ENCODE measurements at regions of chr6 and their contacts with region 1.

Region 1: DNA sequence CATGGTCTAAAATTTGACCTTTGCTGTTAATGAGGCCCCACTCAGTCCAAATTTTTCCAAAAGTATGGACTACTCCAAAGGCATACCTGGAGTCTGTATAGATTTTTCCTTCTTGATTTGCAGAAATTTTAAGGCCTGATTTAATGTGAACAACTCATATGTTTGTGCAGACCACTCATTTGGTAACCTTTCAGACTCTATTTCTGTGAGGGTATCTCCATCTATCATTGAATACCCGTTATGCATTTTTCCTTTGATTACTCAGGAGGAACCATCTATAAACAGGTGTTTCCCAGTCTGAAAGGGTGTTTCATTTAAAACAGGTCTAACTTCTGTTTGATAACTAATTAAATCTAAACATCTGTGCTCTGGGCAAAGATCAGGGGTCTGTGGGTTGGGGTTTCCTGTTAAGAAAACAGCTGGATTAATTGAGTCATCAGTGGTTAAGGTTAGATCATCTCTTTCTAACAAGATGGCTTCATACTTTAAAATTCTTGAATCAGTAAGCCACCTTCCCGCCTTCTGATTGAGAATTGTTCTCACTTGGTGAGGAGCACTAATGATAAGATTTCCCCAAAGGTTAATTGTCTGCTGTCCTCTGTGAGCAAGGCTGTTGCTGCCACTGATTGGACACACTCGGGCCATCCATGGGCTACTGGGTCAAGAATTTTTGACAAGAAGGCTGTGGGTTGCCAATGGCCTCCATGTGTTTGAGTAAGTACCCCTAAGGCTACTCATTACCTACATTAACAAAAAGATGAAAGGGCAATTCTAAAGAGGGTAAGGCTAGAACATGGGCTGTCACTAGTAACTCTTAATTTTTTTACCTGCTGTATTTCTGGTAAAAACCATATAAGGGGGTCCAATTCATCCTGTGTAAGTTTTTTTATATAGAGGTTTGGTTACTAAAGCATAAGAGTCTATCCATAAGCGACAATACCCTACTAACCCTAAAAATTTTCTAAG is 24.1 kb downstream of the HLA-B start:
- DNase-seq: peak in 5 of 9 experiments; percentile 25 to 82 (median 62)
- ATAC-seq: peak; percentile 82
- H3K4me3 ChIP-seq: no peak overlapping the region
- H3K4me3 Mint-ChIP-seq: no peak overlapping the region
- H3K27ac ChIP-seq: no peak overlapping the region
- H3K27ac Mint-ChIP-seq: peak overlapping the region; percentile 14
- H3K4me1 ChIP-seq: no peaks in the 10 kb centered on the region
- H3K4me1 Mint-ChIP-seq: peaks cover 13% of the 10 kb centered on the region
- H3K27me3 ChIP-seq: no peaks in the 10 kb centered on the region
- H3K27me3 Mint-ChIP-seq: no peaks in the 10 kb centered on the region
- CTCF ChIP-seq: no peak

Region 2: DNA sequence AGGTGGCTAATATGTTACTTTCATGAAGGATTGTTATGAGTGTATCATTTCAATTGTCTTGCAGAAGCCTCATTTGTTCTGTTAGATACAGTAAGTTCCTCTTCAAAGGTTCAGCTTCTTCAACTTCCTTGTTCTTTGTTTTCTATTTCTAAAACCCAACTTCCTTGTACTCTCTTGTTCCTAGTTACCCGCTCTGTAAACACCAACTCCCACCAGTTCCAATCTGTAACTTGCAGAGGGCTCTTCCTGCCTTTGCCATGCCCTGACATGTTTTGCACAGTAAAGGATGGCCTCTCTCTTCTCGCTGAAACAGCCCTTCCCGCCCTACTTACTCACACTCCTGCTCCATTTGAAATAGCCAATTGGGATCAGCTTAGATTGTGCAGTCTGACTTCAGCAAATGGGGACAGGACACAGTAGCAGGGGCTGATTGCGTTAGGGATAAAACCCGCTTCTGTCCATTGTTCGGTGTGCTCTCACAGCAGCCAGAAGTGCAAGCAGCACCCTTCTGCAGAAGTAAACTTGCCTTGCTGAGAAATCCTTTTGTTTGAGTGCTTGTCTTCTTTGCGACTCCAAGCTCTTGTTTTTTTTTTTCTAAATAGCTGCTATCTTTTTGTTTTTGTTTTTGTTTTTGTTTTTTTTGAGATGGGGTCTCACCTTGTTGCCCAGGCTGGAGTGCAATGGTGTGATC is 116.6 kb before region 1 on chr6:
- CTCF ChIA-PET with region 1: no interaction called
- POLR2A ChIA-PET with region 1: no interaction called
- intact Hi-C with region 1: no loop called
- DNase-seq: no peak
- ATAC-seq: no peak
- H3K4me3 ChIP-seq: no peak overlapping the region
- H3K4me3 Mint-ChIP-seq: no peak overlapping the region
- H3K27ac ChIP-seq: no peak overlapping the region
- H3K27ac Mint-ChIP-seq: no peak overlapping the region
- H3K4me1 ChIP-seq: no peaks in the 10 kb centered on the region
- H3K4me1 Mint-ChIP-seq: peaks cover 6% of the 10 kb centered on the region
- H3K27me3 ChIP-seq: no peaks in the 10 kb centered on the region
- H3K27me3 Mint-ChIP-seq: no peaks in the 10 kb centered on the region
- CTCF ChIP-seq: no peak

Region 3: DNA sequence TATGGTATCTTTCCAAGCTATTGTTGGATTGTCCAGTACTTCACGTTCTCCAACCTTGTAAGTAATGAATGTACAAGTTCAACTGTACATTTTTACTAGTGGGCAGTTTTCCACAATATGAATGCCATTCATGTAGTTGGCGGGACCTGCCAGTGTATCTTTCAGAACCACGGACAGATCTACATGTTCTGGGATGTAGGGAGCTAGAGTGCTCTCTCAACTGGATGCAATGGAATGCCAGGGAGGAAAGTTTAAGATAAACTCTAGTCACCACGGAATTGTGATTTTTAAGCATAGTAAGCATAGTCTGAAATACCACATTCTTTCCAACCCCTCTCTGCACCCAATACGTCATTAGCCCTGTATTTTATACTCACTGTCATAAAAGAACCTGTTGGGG is 39.6 kb before region 1 on chr6:
- CTCF ChIA-PET with region 1: no interaction called
- POLR2A ChIA-PET with region 1: no interaction called
- intact Hi-C with region 1: loop called in 1 of 2 experiments (anchors 5 kb)
- DNase-seq: no peak
- ATAC-seq: no peak
- H3K4me3 ChIP-seq: no peak overlapping the region
- H3K4me3 Mint-ChIP-seq: no peak overlapping the region
- H3K27ac ChIP-seq: no peak overlapping the region
- H3K27ac Mint-ChIP-seq: no peak overlapping the region
- H3K4me1 ChIP-seq: no peaks in the 10 kb centered on the region
- H3K4me1 Mint-ChIP-seq: no peaks in the 10 kb centered on the region
- H3K27me3 ChIP-seq: peaks cover 0 to 2% of the 10 kb centered on the region in 2 experiments
- H3K27me3 Mint-ChIP-seq: peaks cover 3% of the 10 kb centered on the region
- CTCF ChIP-seq: no peak

Region 4: GRCh38 chr6:31462964-31463870 is 130.3 kb after region 1 on chr6:
- CTCF ChIA-PET with region 1: no interaction called
- POLR2A ChIA-PET with region 1: no interaction called
- intact Hi-C with region 1: no loop called
- DNase-seq: peak; percentile 81 to 98 (median 90)
- ATAC-seq: peak; percentile 93
- H3K4me3 ChIP-seq: peak overlapping the region; percentile 80 to 82
- H3K4me3 Mint-ChIP-seq: peak overlapping the region; percentile 100
- H3K27ac ChIP-seq: peak overlapping the region; percentile 89 to 98
- H3K27ac Mint-ChIP-seq: peak overlapping the region; percentile 98
- H3K4me1 ChIP-seq: peaks cover 48% of the 10 kb centered on the region
- H3K4me1 Mint-ChIP-seq: peaks cover 67% of the 10 kb centered on the region
- H3K27me3 ChIP-seq: no peaks in the 10 kb centered on the region
- H3K27me3 Mint-ChIP-seq: no peaks in the 10 kb centered on the region
- CTCF ChIP-seq: no peak